Activated naive CD4-positive, alpha-beta T cell treated with anti-CD3 and anti-CD28 coated beads for 36 hours (primary cell): ENCODE measurements at regions of chr13 and their contacts with region 1.

Region 1: DNA sequence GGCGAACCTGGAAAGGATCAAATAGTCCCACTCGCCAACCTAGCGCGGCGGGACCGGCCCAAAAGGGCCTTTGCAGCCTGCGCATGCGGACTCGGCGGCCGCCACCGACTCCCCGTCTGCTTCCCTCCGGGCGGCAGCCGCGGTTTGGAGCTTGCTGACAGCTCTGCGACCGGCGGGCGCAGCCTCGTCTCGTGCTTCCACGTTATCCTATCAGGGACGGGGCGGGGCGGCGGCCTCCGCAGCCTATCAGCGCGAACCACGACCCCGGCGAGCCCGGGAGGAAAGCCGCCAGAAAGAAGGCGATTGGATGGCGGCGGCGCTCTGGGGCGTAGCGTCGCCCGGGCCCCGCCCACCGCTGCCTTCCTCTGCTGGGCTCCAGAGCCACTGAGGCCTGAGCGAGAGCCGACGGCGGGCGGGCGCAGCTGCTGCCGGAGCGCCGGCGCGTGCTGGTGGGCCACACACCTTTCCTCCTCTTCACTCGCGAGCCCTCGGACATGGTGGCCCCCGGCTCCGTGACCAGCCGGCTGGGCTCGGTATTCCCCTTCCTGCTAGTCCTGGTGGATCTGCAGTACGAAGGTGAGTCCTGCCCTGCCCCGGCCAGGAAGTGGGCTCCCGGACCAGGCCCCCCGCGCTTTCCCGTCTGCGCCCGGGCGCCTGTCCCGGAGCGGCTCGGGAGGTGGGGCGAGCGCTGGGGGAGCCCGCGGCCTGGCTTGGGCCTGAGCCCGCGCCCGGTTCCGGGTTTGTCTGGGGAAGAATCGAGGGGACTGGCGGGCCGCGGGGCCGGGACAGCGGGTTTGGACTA is at the start of gene DNAJC3:
- DNase-seq: peak; percentile 98
- H3K4me3 Mint-ChIP-seq: peak within 1 kb of the TSS; percentile 93
- H3K27ac Mint-ChIP-seq: peak within 1 kb of the TSS; percentile 86
- H3K4me1 Mint-ChIP-seq: peaks cover 53% of the 10 kb centered on the region
- H3K27me3 Mint-ChIP-seq: no peaks in the 10 kb centered on the region
- total RNA-seq, gene DNAJC3: 13.8 to 14.0 TPM

Region 2: DNA sequence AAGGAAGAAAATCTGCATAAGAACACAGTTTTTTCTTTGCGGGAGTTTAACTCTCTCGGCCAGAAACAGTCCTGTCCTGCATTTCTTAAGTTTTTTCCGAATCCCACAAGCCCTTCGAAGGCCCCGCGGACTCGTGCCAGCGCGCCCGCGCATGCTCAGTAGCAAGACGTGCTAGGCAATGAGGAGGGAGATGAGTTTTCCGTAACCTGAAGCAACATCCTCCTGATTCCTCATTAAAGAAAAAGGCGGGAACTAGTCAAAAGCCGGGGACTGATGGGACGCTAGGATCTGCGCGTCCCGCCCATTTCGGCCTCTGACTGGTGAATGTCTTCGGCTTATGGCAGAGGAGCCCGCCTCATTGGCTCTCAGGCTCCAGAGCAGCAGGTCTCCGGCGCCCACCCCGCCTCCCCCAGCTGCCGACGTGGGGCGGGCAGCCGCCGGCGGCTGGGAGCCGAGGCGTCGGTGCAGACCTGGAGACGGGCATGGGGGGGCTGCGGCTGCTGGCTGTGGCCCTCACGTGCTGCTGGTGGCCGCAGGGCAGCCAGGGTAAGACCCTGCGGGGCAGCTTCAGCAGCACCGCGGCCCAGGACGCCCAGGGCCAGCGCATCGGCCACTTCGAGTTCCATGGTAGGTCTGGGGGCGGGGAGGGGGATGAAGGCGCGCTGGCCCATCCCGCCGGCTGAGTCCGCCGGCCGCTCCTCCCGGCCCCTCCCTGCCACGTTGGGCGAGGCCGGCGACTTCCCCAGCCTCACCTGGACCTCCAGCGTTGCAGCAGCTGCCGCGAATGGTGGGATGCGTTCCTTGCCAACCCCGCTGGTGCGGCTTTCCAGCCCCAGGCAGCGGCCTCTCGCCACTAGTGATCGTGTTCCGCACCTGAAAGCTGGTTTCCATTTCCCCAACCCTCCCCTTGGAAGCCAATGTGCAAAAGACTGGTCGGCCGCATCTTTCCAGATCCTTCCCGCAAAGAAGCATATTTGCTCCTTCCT is 1075.2 kb before region 1 on chr13 and contains the start of gene GPR180:
- CTCF ChIA-PET with region 1: no interaction called
- intact Hi-C with region 1: loop called (anchors 2 kb)
- DNase-seq: peak; percentile 94
- H3K4me3 Mint-ChIP-seq: peak within 1 kb of the TSS; percentile 86
- H3K27ac Mint-ChIP-seq: peak within 1 kb of the TSS; percentile 84
- H3K4me1 Mint-ChIP-seq: peaks cover 34% of the 10 kb centered on the region
- H3K27me3 Mint-ChIP-seq: no peaks in the 10 kb centered on the region
- total RNA-seq, gene GPR180: 5.6 to 5.7 TPM

Region 3: GRCh38 chr13:95579303-95579702 is 97.7 kb before region 1 on chr13:
- CTCF ChIA-PET with region 1: no interaction called
- intact Hi-C with region 1: loop called (anchors 1 kb)
- DNase-seq: no peak
- H3K4me3 Mint-ChIP-seq: no peak overlapping the region
- H3K27ac Mint-ChIP-seq: no peak overlapping the region
- H3K4me1 Mint-ChIP-seq: peaks cover 5% of the 10 kb centered on the region
- H3K27me3 Mint-ChIP-seq: peaks cover 3% of the 10 kb centered on the region

Region 4: DNA sequence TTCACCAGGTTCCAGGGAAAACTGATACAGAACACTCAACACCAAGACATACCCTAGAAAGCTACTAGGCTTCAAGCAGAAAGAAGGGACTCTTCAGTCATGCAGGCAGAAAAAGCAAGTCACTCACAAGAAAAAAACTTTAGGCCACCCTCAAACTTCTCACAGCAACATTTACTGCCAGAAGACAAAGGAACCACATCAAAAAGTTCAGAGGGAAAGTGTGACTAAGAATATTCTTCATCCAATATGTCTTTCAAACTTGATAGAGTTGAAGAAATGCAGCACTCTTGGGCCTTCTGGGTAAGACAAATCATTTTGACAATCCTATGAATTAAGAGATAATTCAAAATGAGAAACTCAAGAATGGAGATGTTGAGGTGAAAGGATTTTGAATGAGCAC is 40.1 kb before region 1 on chr13:
- CTCF ChIA-PET with region 1: no interaction called
- intact Hi-C with region 1: loop called (anchors 1 kb)
- DNase-seq: no peak
- H3K4me3 Mint-ChIP-seq: no peak overlapping the region
- H3K27ac Mint-ChIP-seq: peak overlapping the region; percentile 66
- H3K4me1 Mint-ChIP-seq: peaks cover 12% of the 10 kb centered on the region
- H3K27me3 Mint-ChIP-seq: peaks cover 22% of the 10 kb centered on the region

Region 5: GRCh38 chr13:95703576-95703975 is 26.6 kb after region 1 on chr13:
- CTCF ChIA-PET with region 1: no interaction called
- intact Hi-C with region 1: loop called (anchors 2 kb)
- DNase-seq: no peak
- H3K4me3 Mint-ChIP-seq: no peak overlapping the region
- H3K27ac Mint-ChIP-seq: no peak overlapping the region
- H3K4me1 Mint-ChIP-seq: peaks cover 66% of the 10 kb centered on the region
- H3K27me3 Mint-ChIP-seq: no peaks in the 10 kb centered on the region

Region 6: GRCh38 chr13:95771905-95772304 is 94.9 kb after region 1 on chr13:
- CTCF ChIA-PET with region 1: no interaction called
- intact Hi-C with region 1: loop called (anchors 5 kb)
- DNase-seq: no peak
- H3K4me3 Mint-ChIP-seq: no peak overlapping the region
- H3K27ac Mint-ChIP-seq: no peak overlapping the region
- H3K4me1 Mint-ChIP-seq: peaks cover 4% of the 10 kb centered on the region
- H3K27me3 Mint-ChIP-seq: no peaks in the 10 kb centered on the region